ENCODE measurements at regions of chr3 and their contacts with region 1.

Region 1: GRCh38 chr3:45656575-45657363 is 32.4 kb upstream of the SACM1L start:
- DNase-seq: no peak
- H3K4me3 ChIP-seq: no peak overlapping the region
- H3K27ac ChIP-seq: peak overlapping the region in 3 of 4 donors; percentile 15 to 55 (median 45)
- H3K4me1 ChIP-seq: peaks cover 3 to 35% (median 4%) of the 10 kb centered on the region in 3 donors
- H3K27me3 ChIP-seq: no peaks in the 10 kb centered on the region
- CTCF ChIP-seq: peak; percentile 91 to 98 (median 96)
- POLR2A ChIP-seq: no peak

Region 2: DNA sequence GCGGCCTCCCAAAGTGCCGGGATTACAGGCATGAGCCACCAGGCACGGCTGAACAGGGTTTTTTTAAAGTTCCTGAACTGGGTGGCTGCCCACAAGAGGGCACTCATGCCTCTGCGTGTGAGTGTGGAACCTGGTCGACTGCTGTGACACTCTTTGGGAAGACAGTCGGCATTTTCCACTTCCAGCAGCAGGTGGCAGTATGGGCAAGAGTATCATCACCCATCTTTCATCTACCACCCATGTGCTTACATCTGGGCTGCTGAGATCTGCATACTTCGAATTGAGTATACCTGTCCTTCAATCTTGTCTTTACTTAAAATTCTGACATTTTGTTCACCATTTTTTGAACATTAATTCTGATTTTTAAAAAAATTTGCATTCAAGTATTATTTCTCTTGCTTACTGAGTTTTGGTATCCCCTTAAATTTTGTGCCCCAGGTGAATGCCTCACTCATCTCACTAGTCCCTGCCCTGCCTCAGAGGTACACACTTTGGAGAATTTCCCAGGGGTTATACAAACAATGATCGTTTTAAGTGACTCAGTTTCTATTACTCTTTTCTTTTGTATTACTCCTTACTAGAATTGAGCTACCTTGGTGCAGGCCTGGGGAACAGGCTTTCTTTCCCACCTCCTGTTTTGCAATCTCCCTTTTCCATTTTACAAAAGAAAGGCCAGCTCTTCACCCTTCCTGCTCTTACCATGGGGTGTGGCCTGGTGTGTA is 618.9 kb before region 1 on chr3:
- intact Hi-C with region 1: loop called (anchors 10 kb)
- DNase-seq: peak; percentile 61
- H3K4me3 ChIP-seq: peak overlapping the region in 1 of 4 donors; percentile 45
- H3K27ac ChIP-seq: peak overlapping the region in 3 of 4 donors; percentile 34 to 60 (median 57)
- H3K4me1 ChIP-seq: peaks cover 11 to 58% (median 50%) of the 10 kb centered on the region in 3 donors
- H3K27me3 ChIP-seq: peaks cover 0 to 14% (median 0%) of the 10 kb centered on the region in 4 donors
- CTCF ChIP-seq: peak; percentile 87 to 99 (median 98)
- POLR2A ChIP-seq: no peak

Region 3: DNA sequence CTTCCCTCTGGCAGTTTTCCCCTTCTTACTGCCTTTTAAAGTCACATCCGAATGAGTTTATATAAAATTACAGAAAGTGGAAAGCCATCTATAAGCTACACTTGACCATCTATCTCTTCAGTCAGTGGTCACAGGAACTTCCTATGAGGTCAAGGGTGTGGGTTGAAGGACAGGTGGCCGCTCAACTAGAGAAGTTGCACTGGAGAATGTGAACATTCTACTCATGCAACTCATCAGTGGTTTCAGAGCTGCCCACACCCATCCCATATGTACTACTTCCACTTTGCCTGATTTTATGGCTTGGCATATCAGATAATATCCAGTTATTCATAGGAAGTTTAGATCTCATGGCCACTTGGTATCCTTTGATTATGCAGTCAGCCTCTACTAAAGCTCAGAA is 373.3 kb before region 1 on chr3:
- intact Hi-C with region 1: no loop called
- DNase-seq: no peak
- H3K4me3 ChIP-seq: no peak overlapping the region
- H3K27ac ChIP-seq: no peak overlapping the region
- H3K4me1 ChIP-seq: no peaks in the 10 kb centered on the region
- H3K27me3 ChIP-seq: peaks cover 0 to 20% (median 0%) of the 10 kb centered on the region in 4 donors
- CTCF ChIP-seq: no peak
- POLR2A ChIP-seq: no peak

Region 4: GRCh38 chr3:45398178-45398577 is 258.6 kb before region 1 on chr3:
- intact Hi-C with region 1: no loop called
- DNase-seq: no peak
- H3K4me3 ChIP-seq: no peak overlapping the region
- H3K27ac ChIP-seq: no peak overlapping the region
- H3K4me1 ChIP-seq: no peaks in the 10 kb centered on the region
- H3K27me3 ChIP-seq: no peaks in the 10 kb centered on the region
- CTCF ChIP-seq: no peak
- POLR2A ChIP-seq: no peak

Region 5: DNA sequence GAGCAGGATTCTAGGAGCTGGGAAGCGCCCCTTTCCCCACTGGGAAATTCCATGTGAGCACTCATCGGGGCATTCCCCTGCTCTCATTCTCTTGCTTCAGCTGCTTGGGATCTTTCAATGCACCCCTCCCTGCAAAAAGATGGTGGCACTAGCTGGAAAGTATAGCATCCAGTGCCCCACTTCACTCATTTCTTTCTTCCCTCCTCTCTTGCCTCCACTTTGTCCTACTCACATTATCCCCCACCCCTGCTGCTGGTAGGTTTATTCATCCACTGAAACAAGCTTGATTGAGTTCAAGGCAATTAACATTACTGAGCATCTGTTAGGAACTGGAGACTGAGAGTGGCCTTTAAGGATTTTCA is 147.0 kb before region 1 on chr3:
- intact Hi-C with region 1: loop called (anchors 2 kb)
- DNase-seq: no peak
- H3K4me3 ChIP-seq: no peak overlapping the region
- H3K27ac ChIP-seq: peak overlapping the region in 2 of 4 donors; percentile 18 to 49
- H3K4me1 ChIP-seq: peaks cover 12 to 22% (median 18%) of the 10 kb centered on the region in 3 donors
- H3K27me3 ChIP-seq: no peaks in the 10 kb centered on the region
- CTCF ChIP-seq: no peak
- POLR2A ChIP-seq: no peak

Region 6: DNA sequence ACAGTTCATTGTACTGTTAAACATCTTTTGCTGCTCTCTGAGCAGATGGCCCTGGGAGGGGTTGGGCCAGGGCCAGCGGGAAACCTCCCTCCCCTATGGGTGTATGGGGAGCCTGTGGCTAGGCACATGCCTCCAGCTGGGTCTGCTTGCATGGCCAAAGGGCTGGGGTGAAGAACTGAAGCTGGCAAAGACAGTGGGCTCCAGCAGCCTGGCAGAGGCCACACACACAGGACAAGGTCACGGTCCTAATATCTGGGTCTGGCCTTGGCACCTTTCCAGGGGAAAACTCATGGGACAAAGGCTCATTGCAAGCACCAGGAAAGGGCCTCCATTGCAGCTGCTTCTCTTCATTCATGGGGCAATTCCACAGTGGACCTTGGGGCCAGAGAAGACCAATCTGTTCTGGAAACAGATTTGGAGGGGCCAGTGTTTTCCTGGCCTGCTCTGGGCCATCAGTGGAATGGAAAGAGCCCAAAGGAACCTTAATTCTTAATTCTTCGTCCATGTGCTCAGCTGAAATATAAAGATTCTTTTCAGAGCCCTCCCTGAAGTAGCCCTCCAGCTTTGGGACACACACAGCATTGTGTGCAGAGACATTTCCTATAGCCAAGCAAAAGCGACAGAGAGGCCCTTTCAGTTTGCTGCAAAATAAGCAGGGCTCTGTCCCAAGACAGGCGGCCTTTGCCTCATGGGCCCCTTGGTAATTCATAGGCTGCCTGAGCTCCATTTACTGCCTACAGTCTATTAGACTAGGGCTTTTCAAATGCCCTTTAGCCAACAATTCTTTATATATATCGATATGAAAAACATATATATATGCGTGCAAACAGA is 73.5 kb before region 1 on chr3:
- intact Hi-C with region 1: no loop called
- DNase-seq: no peak
- H3K4me3 ChIP-seq: no peak overlapping the region
- H3K27ac ChIP-seq: no peak overlapping the region
- H3K4me1 ChIP-seq: peaks cover 0 to 18% (median 7%) of the 10 kb centered on the region in 3 donors
- H3K27me3 ChIP-seq: no peaks in the 10 kb centered on the region
- CTCF ChIP-seq: no peak
- POLR2A ChIP-seq: no peak

Region 7: GRCh38 chr3:45593708-45594609 is 62.8 kb before region 1 on chr3:
- intact Hi-C with region 1: loop called (anchors 5 kb)
- DNase-seq: no peak
- H3K4me3 ChIP-seq: peak overlapping the region; percentile 54 to 94 (median 58)
- H3K27ac ChIP-seq: peak overlapping the region; percentile 83 to 95 (median 90)
- H3K4me1 ChIP-seq: peaks cover 47 to 62% (median 51%) of the 10 kb centered on the region in 3 donors
- H3K27me3 ChIP-seq: no peaks in the 10 kb centered on the region
- CTCF ChIP-seq: peak in 2 of 6 experiments; percentile 10 to 12
- POLR2A ChIP-seq: peak in 2 of 4 donors; percentile 49 to 72

Region 8: DNA sequence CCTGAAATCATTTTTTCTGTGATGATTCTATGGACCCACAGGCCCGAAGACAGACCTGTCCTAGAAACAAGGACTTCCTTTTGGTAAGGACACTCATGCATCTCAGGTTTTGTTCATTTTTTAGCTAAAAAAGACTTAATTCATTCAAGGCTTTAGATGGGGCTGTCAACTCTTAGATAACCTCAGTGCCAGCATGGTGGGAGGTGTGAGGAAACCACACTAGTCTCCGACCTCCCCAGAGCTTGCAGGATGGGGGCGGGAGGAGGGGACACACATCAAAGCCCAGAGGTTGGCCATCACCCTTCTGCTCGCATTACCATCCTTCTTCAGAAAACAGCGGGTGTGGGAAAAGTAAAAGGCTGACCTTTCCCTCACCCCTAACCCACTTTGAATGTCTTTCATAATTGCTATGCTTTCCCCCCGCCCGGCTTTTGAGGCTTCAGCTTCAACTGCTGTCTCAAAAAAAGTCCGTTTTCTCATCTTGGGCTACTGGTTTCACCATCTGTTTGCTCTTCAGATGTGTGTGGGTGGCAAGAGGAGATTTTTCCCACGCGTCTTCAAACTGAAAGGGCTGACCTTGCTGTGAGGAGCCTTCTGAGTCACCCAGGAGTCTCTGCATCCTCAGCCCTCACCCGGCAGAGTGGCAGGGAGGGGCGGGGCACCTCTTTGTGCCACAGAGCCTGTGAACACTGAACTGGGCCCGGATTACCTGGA is 258.9 kb after region 1 on chr3:
- intact Hi-C with region 1: no loop called
- DNase-seq: no peak
- H3K4me3 ChIP-seq: peak overlapping the region in 1 of 4 donors; percentile 38
- H3K27ac ChIP-seq: peak overlapping the region in 2 of 4 donors; percentile 4 to 31
- H3K4me1 ChIP-seq: peaks cover 0 to 29% (median 12%) of the 10 kb centered on the region in 3 donors
- H3K27me3 ChIP-seq: no peaks in the 10 kb centered on the region
- CTCF ChIP-seq: no peak
- POLR2A ChIP-seq: no peak